Heart left ventricle (tissue), 16 donors: ENCODE measurements at regions of chr10 and their contacts with region 1.

Region 1: DNA sequence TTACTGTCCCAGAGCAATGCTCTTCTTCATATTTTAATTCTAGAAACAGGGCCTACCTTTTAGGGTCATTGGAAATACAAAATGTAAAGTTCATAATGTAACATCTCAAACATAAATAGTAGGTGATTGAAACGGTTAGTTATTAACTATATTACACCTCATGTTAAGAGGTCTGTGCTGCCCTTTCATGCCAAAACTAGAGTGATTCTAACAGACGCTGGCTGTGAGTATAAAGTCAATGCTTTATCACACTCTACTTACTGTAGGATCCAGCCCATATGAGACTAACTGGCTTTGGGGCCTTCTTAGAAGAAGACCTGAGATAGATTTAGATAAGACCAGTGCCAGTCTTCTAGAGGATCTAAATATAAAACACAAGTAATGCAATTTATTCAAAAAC is 966.1 kb upstream of the SORCS1 start:
- DNase-seq: no peak
- ATAC-seq: no peak
- H3K4me3 ChIP-seq: no peak overlapping the region
- H3K27ac ChIP-seq: no peak overlapping the region
- H3K4me1 ChIP-seq: no peaks in the 10 kb centered on the region
- H3K27me3 ChIP-seq: no peaks in the 10 kb centered on the region
- CTCF ChIP-seq: no peak
- POLR2A ChIP-seq: no peak

Region 2: GRCh38 chr10:108104551-108105156 is 25.9 kb before region 1 on chr10:
- intact Hi-C with region 1: loop called in 1 of 10 experiments (anchors 2 kb)
- DNase-seq: no peak
- ATAC-seq: peak in 2 of 4 donors; percentile 56 to 65
- H3K4me3 ChIP-seq: no peak overlapping the region
- H3K27ac ChIP-seq: no peak overlapping the region
- H3K4me1 ChIP-seq: peaks cover 0 to 4% (median 0%) of the 10 kb centered on the region in 12 donors
- H3K27me3 ChIP-seq: no peaks in the 10 kb centered on the region
- CTCF ChIP-seq: no peak
- POLR2A ChIP-seq: no peak